ENCODE measurements at regions of chr1 and their contacts with region 1.

Region 1: GRCh38 chr1:67685067-67685557 is at the start of gene GADD45A:
- DNase-seq: peak; percentile 98 to 99
- H3K4me3 ChIP-seq: peak within 1 kb of the TSS; percentile 76 to 91 (median 87)
- H3K27ac ChIP-seq: peak within 1 kb of the TSS; percentile 97 to 98
- H3K4me1 ChIP-seq: peaks cover 4 to 5% of the 10 kb centered on the region in 2 donors
- H3K27me3 ChIP-seq: no peaks in the 10 kb centered on the region
- CTCF ChIP-seq: peak in 1 of 3 donors; percentile 40
- POLR2A ChIP-seq: peak; percentile 97
- total RNA-seq, gene GADD45A: 52.4 to 68.2 (median 55.4) TPM

Region 2: DNA sequence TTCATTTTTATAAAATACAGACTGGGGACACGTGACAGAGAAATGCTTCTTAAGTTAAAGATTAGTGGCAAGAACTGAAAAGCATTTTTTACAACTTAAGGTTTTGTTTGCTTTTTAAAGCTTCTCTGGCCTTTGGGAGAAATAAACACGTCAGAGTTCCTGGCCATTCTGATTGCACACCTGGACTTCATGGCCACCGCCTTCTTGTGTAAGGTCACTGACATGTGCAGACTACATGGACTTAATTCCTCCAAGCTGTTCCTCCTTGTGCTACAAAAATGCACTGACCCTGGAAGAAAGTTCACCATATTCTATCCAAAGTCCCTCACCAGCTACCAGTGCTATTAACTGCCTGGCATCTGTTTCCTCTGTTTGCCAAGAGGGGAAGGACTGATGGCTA is 56.0 kb after region 1 on chr1:
- intact Hi-C with region 1: loop called (anchors 5 kb)
- DNase-seq: no peak
- H3K4me3 ChIP-seq: no peak overlapping the region
- H3K27ac ChIP-seq: no peak overlapping the region
- H3K4me1 ChIP-seq: peaks cover 0 to 5% of the 10 kb centered on the region in 2 donors
- H3K27me3 ChIP-seq: no peaks in the 10 kb centered on the region
- CTCF ChIP-seq: no peak
- POLR2A ChIP-seq: no peak

Region 3: DNA sequence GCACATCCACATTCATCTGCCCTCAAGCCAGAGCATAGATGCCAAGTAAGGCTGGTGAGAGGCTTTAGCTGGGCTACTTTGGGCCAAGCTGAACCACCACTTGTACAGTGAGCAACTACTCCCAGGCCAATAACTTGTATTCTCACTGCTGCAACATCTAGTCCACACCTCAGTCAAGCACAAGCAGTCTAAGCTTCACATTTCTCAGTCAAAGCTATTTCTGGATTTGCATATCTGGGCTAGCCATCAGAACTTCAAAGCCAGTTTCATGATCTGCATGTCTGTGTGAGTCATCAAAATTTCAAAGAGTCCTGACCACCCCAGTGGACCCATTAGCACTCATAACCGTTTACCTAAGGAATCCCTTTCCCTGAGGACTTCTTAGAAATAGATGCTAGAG is 443.0 kb after region 1 on chr1:
- intact Hi-C with region 1: no loop called
- DNase-seq: no peak
- H3K4me3 ChIP-seq: no peak overlapping the region
- H3K27ac ChIP-seq: no peak overlapping the region
- H3K4me1 ChIP-seq: no peaks in the 10 kb centered on the region
- H3K27me3 ChIP-seq: no peaks in the 10 kb centered on the region
- CTCF ChIP-seq: no peak
- POLR2A ChIP-seq: no peak

Measured in breast epithelium (tissue), 4 donors.